ENCODE measurements at regions of chr1 and their contacts with region 1.

Region 1: GRCh38 chr1:235105051-235106043 is 23.3 kb downstream of the TOMM20 start:
- DNase-seq: peak in 1 of 9 donors; percentile 21
- ATAC-seq: peak; percentile 29
- H3K4me3 ChIP-seq: peak overlapping the region; percentile 55
- H3K4me3 Mint-ChIP-seq: peak overlapping the region in 9 of 10 donors; percentile 15 to 85 (median 77)
- H3K27ac ChIP-seq: no peak overlapping the region
- H3K27ac Mint-ChIP-seq: peak overlapping the region in 2 of 9 donors; percentile 54 to 76
- H3K4me1 ChIP-seq: peaks cover 21 to 23% of the 10 kb centered on the region in 2 donors
- H3K4me1 Mint-ChIP-seq: peaks cover 20 to 47% (median 41%) of the 10 kb centered on the region in 7 donors
- H3K27me3 ChIP-seq: no peaks in the 10 kb centered on the region
- H3K27me3 Mint-ChIP-seq: peaks cover 0 to 5% (median 0%) of the 10 kb centered on the region in 5 donors

Region 2: DNA sequence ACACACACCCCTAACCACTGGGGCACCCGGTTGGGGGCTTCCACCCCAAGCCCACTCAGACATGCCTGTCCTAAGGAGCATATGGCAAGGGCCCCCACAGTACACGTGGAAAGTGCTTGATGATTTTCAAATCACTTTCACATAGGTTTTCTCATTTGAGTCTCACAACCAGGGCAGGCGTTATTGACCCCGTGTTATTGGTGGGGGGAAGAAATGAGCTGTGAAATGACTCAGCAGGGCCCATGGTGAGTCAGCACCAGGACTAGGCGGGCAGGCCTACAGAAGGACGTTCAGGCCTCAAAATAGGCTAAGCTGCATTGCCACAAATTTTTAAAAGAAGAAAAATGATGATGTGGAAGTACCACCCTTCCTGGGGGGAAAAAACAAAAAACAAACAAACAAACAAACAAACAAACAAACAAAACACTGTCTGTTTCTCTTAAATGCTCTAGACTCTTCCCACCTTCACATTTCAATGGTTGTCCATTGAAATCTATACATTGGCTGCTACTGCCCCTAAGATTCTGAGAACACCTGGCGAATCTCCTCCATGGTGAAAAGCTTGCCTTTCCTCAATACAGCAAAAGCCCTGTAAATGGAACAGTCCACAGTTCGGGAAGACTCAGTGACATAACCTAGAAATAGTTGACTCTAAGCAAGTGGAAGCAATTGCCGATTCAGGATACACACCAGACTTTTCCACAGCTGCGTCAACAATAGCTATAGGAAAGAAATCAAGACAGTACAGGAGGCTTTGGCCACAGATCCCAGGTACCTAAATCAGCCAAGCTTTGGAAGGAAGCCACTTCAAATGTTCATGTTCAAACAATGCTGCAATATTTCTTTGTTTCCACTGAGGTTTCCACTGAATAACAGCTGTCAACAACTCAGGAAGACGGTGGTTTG is 211.4 kb before region 1 on chr1:
- CTCF ChIA-PET with region 1: no interaction called
- POLR2A ChIA-PET with region 1: no interaction called
- intact Hi-C with region 1: no loop called
- DNase-seq: peak in 2 of 9 donors; percentile 12 to 34
- ATAC-seq: no peak
- H3K4me3 ChIP-seq: no peak overlapping the region
- H3K4me3 Mint-ChIP-seq: peak overlapping the region in 2 of 10 donors; percentile 33 to 42
- H3K27ac ChIP-seq: no peak overlapping the region
- H3K27ac Mint-ChIP-seq: peak overlapping the region in 5 of 9 donors; percentile 6 to 78 (median 32)
- H3K4me1 ChIP-seq: no peaks in the 10 kb centered on the region
- H3K4me1 Mint-ChIP-seq: peaks cover 11 to 60% (median 22%) of the 10 kb centered on the region in 7 donors
- H3K27me3 ChIP-seq: no peaks in the 10 kb centered on the region
- H3K27me3 Mint-ChIP-seq: no peaks in the 10 kb centered on the region

Region 3: DNA sequence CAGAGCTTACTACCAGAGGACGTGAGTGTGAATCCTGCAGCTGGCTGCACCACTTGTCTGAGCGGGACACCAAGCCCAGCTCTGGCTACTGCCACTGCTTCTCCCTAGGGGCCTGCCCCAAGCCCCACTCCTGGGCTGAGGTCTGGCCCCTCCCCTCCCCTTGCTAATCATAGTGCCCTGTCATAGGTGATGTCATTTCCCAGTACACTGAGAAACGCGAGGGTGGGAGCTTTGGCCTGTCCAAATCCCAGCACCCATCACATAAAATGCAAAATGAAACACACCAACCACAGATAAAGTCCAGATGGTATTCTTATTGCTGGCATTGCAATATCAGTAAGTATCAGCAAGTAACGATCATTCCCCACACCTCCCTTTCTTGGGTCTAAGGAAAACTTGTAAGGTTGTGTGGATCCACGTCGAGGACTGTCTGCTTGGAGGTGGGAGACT is 54.4 kb before region 1 on chr1:
- CTCF ChIA-PET with region 1: no interaction called
- POLR2A ChIA-PET with region 1: no interaction called
- intact Hi-C with region 1: no loop called
- DNase-seq: no peak
- ATAC-seq: no peak
- H3K4me3 ChIP-seq: no peak overlapping the region
- H3K4me3 Mint-ChIP-seq: no peak overlapping the region
- H3K27ac ChIP-seq: no peak overlapping the region
- H3K27ac Mint-ChIP-seq: peak overlapping the region in 2 of 9 donors; percentile 9 to 26
- H3K4me1 ChIP-seq: no peaks in the 10 kb centered on the region
- H3K4me1 Mint-ChIP-seq: peaks cover 0 to 36% (median 0%) of the 10 kb centered on the region in 7 donors
- H3K27me3 ChIP-seq: no peaks in the 10 kb centered on the region
- H3K27me3 Mint-ChIP-seq: no peaks in the 10 kb centered on the region

Region 4: DNA sequence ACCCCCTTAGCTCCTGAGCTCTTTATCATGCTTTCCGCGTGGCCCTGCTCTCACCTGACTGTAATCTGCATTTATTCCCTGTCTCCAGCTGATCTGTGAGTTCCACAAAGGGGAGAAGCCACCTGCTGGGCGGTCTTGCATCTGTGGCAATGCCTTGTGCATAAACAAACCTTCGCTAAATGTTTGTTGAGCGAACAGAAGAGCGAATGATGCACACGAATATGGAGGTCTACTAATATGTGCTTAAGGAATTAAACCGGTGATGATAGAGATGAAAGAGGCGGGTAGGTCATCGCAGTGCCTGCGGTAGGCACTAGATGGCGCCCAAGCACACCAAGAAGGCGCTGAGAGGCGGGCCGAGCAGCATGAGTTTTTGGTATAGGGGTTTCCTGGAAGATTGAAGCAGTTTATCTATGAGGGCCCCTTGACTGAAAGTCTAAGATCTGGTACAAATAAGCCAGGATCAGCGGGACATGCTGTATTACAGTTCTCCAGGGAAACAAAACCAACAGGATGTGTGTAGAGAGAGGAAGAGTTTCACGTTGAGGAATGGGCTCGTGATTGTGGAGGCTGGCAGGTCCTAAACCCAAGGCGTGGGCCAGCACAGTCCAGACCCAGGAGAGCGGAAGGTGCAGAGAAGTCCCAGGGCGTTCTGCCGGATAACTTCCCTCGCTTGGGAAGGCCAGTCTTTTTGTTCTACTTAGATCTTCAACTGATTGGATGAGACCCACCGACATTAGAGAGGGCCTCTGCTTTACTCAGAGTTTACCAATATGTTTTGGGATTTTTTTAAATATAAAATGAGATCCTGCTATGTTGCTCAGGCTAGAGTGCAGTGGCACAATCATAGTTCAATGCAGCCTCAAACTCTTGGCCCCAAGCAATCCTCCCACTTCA is 11.4 kb before region 1 on chr1:
- CTCF ChIA-PET with region 1: interaction called, 7 read pairs
- POLR2A ChIA-PET with region 1: interaction called, 4 read pairs
- intact Hi-C with region 1: loop called (anchors 1 kb)
- DNase-seq: peak; percentile 67 to 89 (median 80)
- ATAC-seq: peak; percentile 97
- H3K4me3 ChIP-seq: no peak overlapping the region
- H3K4me3 Mint-ChIP-seq: peak overlapping the region in 1 of 10 donors; percentile 41
- H3K27ac ChIP-seq: no peak overlapping the region
- H3K27ac Mint-ChIP-seq: peak overlapping the region in 3 of 9 donors; percentile 49 to 88 (median 50)
- H3K4me1 ChIP-seq: peaks cover 0 to 3% of the 10 kb centered on the region in 2 donors
- H3K4me1 Mint-ChIP-seq: peaks cover 6 to 14% (median 7%) of the 10 kb centered on the region in 7 donors
- H3K27me3 ChIP-seq: no peaks in the 10 kb centered on the region
- H3K27me3 Mint-ChIP-seq: peaks cover 0 to 6% (median 0%) of the 10 kb centered on the region in 5 donors

Region 5: GRCh38 chr1:235128456-235129328 is 23.3 kb after region 1 on chr1 and contains the start of gene TOMM20:
- CTCF ChIA-PET with region 1: interaction called, 3 read pairs
- POLR2A ChIA-PET with region 1: interaction called, 5 read pairs
- intact Hi-C with region 1: loop called (anchors 1 kb)
- DNase-seq: peak; percentile 91 to 97 (median 95)
- ATAC-seq: peak; percentile 97
- H3K4me3 ChIP-seq: peak within 1 kb of the TSS; percentile 98
- H3K4me3 Mint-ChIP-seq: peak within 1 kb of the TSS; percentile 88 to 99 (median 96)
- H3K27ac ChIP-seq: peak within 1 kb of the TSS; percentile 94
- H3K27ac Mint-ChIP-seq: peak within 1 kb of the TSS; percentile 93 to 99 (median 98)
- H3K4me1 ChIP-seq: peaks cover 22 to 24% of the 10 kb centered on the region in 2 donors
- H3K4me1 Mint-ChIP-seq: peaks cover 17 to 55% (median 42%) of the 10 kb centered on the region in 7 donors
- H3K27me3 ChIP-seq: no peaks in the 10 kb centered on the region
- H3K27me3 Mint-ChIP-seq: no peaks in the 10 kb centered on the region
- total RNA-seq, gene TOMM20: 88.0 to 124 (median 100) TPM

Region 6: GRCh38 chr1:235246022-235246991 is 141.0 kb after region 1 on chr1:
- CTCF ChIA-PET with region 1: no interaction called
- POLR2A ChIA-PET with region 1: no interaction called
- intact Hi-C with region 1: loop called (anchors 5 to 10 kb)
- DNase-seq: no peak
- ATAC-seq: no peak
- H3K4me3 ChIP-seq: no peak overlapping the region
- H3K4me3 Mint-ChIP-seq: peak overlapping the region in 6 of 10 donors; percentile 14 to 47 (median 33)
- H3K27ac ChIP-seq: peak overlapping the region; percentile 39
- H3K27ac Mint-ChIP-seq: peak overlapping the region in 7 of 9 donors; percentile 5 to 79 (median 52)
- H3K4me1 ChIP-seq: peaks cover 13 to 18% of the 10 kb centered on the region in 2 donors
- H3K4me1 Mint-ChIP-seq: peaks cover 17 to 57% (median 48%) of the 10 kb centered on the region in 7 donors
- H3K27me3 ChIP-seq: no peaks in the 10 kb centered on the region
- H3K27me3 Mint-ChIP-seq: no peaks in the 10 kb centered on the region